MCF 10A (cell line): ENCODE measurements at regions of chr2 and their contacts with region 1.

Region 1: GRCh38 chr2:154623819-154624218 is 74.7 kb upstream of the KCNJ3 start:
- DNase-seq: peak; percentile 60
- H3K4me3 Mint-ChIP-seq: no peak overlapping the region
- H3K27ac Mint-ChIP-seq: no peak overlapping the region
- H3K4me1 Mint-ChIP-seq: no peaks in the 10 kb centered on the region
- H3K27me3 Mint-ChIP-seq: peaks cover 84% of the 10 kb centered on the region
- CTCF ChIP-seq: peak; percentile 54

Region 2: GRCh38 chr2:154452906-154453493 is 170.8 kb before region 1 on chr2:
- CTCF ChIA-PET with region 1: no interaction called
- POLR2A ChIA-PET with region 1: no interaction called
- intact Hi-C with region 1: loop called (anchors 10 kb)
- DNase-seq: peak; percentile 33
- H3K4me3 Mint-ChIP-seq: no peak overlapping the region
- H3K27ac Mint-ChIP-seq: no peak overlapping the region
- H3K4me1 Mint-ChIP-seq: no peaks in the 10 kb centered on the region
- H3K27me3 Mint-ChIP-seq: peaks cover 74% of the 10 kb centered on the region
- CTCF ChIP-seq: peak; percentile 37

Region 3: GRCh38 chr2:154497019-154497418 is 126.8 kb before region 1 on chr2:
- CTCF ChIA-PET with region 1: no interaction called
- POLR2A ChIA-PET with region 1: no interaction called
- intact Hi-C with region 1: no loop called
- DNase-seq: no peak
- H3K4me3 Mint-ChIP-seq: no peak overlapping the region
- H3K27ac Mint-ChIP-seq: no peak overlapping the region
- H3K4me1 Mint-ChIP-seq: no peaks in the 10 kb centered on the region
- H3K27me3 Mint-ChIP-seq: peaks cover 14% of the 10 kb centered on the region
- CTCF ChIP-seq: no peak

Region 4: DNA sequence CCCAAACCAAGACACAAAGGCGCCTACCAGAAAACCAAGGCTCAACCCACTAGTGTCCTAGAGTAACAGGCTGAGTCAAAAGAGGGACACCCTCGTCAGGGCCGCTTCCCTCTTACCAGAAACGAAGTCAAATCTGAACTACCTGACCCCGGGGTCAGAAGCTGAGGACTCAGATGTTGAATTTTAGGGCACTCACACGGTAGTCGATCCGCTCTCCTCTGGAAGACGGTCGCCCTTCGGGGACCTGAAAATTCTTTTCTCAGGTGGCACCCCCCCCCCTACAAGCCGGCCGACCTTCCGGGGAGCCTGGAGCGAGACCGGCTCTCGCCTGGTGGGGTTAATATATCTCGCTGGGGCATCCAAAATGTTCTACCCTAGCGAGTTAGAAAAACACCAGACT is 46.4 kb before region 1 on chr2:
- CTCF ChIA-PET with region 1: no interaction called
- POLR2A ChIA-PET with region 1: no interaction called
- intact Hi-C with region 1: no loop called
- DNase-seq: no peak
- H3K4me3 Mint-ChIP-seq: no peak overlapping the region
- H3K27ac Mint-ChIP-seq: no peak overlapping the region
- H3K4me1 Mint-ChIP-seq: no peaks in the 10 kb centered on the region
- H3K27me3 Mint-ChIP-seq: no peaks in the 10 kb centered on the region
- CTCF ChIP-seq: no peak

Region 5: DNA sequence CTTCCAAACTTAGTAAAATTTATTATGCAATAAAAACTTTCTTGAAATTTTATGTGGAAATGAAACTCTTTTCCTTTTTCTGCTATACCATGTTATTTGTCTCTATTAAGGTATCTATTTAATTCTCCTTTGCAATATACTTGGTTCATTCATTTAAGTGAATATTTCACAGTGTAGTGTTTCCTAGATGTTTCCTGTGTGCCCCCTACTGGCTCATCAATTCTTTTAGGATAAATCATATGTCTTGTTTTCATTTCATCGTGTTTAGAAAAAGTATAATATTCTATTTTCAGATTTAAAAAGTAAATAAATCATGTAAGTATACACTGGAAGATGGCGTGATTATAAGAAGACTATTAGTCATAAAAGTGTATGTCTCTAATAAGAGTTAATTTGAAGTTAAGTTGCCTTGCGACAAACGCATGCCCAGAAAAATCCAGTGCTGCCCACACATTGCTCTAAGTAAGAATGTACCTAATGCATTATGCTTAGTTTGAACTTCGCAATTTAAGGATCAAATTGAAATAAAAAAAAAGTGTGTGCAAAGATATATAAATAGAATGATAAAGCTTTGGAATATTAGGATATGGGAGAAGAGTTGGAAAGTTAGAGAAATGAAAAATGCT is 600.1 kb after region 1 on chr2:
- CTCF ChIA-PET with region 1: interaction called, 7 read pairs
- POLR2A ChIA-PET with region 1: no interaction called
- intact Hi-C with region 1: loop called (anchors 1 kb)
- DNase-seq: peak; percentile 22
- H3K4me3 Mint-ChIP-seq: no peak overlapping the region
- H3K27ac Mint-ChIP-seq: no peak overlapping the region
- H3K4me1 Mint-ChIP-seq: no peaks in the 10 kb centered on the region
- H3K27me3 Mint-ChIP-seq: peaks cover 79% of the 10 kb centered on the region
- CTCF ChIP-seq: peak; percentile 31

Region 6: DNA sequence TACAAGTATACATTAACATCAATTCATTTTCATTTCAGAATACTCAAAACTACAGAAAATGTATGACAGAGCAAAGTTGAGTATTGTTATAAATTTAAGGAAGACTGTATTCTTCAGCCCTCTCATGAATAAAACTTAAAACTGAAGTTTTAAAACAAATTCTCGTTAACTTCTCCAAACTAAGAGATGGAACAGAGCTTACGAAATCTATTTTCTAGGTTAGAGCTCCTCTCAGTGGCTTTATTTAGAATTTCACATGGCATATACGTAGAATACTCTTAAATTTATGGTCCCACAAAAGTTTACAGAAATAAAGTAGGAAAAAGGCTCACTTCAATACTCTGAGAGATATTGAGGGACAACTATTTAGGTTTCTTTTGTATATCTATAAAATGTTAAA is 686.8 kb after region 1 on chr2:
- CTCF ChIA-PET with region 1: interaction called, 22 read pairs
- POLR2A ChIA-PET with region 1: no interaction called
- intact Hi-C with region 1: loop called (anchors 1 kb)
- DNase-seq: peak; percentile 27
- H3K4me3 Mint-ChIP-seq: no peak overlapping the region
- H3K27ac Mint-ChIP-seq: no peak overlapping the region
- H3K4me1 Mint-ChIP-seq: no peaks in the 10 kb centered on the region
- H3K27me3 Mint-ChIP-seq: no peaks in the 10 kb centered on the region
- CTCF ChIP-seq: peak; percentile 53